IMR-90 (cell line): ENCODE measurements at regions of chr22 and their contacts with region 1.

Region 1: DNA sequence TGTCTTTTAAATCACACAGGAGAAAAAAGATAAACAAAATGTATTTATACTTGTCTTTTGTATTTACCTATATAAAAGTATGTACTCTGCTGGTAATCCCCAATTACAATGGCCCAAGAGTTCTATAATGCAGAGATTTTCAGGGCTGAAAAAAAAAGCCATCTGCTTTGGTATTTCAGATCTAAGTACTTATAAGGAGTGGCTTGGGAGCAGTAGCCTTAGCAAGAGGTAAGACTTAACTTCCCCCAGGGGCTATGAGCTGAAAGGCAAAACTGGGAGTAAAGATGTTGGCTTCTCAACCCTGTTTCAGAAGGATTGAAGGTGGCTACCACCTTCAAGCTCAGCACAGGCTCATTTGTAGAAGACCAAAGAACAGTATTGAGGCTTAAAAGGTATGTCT is 35.3 kb upstream of the EP300 start:
- DNase-seq: no peak
- ATAC-seq: no peak
- H3K4me3 ChIP-seq: no peak overlapping the region
- H3K27ac ChIP-seq: no peak overlapping the region
- H3K4me1 ChIP-seq: peaks cover 6% of the 10 kb centered on the region; the same call in 1 of the 2 replicates
- H3K27me3 ChIP-seq: no peaks in the 10 kb centered on the region
- CTCF ChIP-seq: no peak
- POLR2A ChIP-seq: no peak
- RAD21 ChIP-seq: no peak

Region 2: GRCh38 chr22:40857309-40857851 is 199.7 kb before region 1 on chr22:
- CTCF ChIA-PET with region 1: no interaction called
- POLR2A ChIA-PET with region 1: no interaction called
- dilution Hi-C with region 1: no loop called
- in situ Hi-C with region 1: no loop called
- intact Hi-C with region 1: no loop called
- DNase-seq: no peak
- ATAC-seq: no peak; the same call in 1 of the 2 replicates
- H3K4me3 ChIP-seq: peak overlapping the region; percentile 67
- H3K27ac ChIP-seq: peak overlapping the region; percentile 95
- H3K4me1 ChIP-seq: peaks cover 9% of the 10 kb centered on the region
- H3K27me3 ChIP-seq: no peaks in the 10 kb centered on the region
- CTCF ChIP-seq: no peak
- POLR2A ChIP-seq: no peak
- RAD21 ChIP-seq: no peak

Region 3: DNA sequence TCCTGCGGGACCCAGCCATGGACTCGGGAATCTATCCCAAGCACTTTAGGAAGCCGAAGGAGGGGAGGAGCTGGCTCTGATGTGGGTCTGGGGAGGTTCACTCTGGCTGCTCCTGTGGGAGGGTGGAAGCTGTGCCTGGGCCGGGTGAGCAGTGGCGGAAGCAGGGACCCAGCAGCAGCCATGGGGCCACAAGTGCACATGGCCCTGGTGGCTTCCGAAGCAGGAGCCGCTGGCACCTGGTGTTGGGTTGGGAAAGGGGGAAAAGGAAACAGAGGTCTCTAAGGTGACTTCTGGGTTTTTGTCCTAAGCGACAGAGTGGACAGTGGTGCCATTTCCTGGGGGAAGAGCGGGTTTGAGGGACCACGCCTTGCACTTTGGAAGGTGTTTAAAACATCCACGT is 66.6 kb before region 1 on chr22:
- CTCF ChIA-PET with region 1: no interaction called
- POLR2A ChIA-PET with region 1: no interaction called
- dilution Hi-C with region 1: no loop called
- in situ Hi-C with region 1: no loop called
- intact Hi-C with region 1: loop called (anchors 5 kb)
- DNase-seq: no peak
- ATAC-seq: no peak
- H3K4me3 ChIP-seq: no peak overlapping the region
- H3K27ac ChIP-seq: no peak overlapping the region
- H3K4me1 ChIP-seq: no peaks in the 10 kb centered on the region
- H3K27me3 ChIP-seq: peaks cover 26% of the 10 kb centered on the region
- CTCF ChIP-seq: no peak
- POLR2A ChIP-seq: no peak
- RAD21 ChIP-seq: no peak

Region 4: GRCh38 chr22:41780746-41781505 is 723.9 kb after region 1 on chr22:
- CTCF ChIA-PET with region 1: no interaction called
- POLR2A ChIA-PET with region 1: no interaction called
- dilution Hi-C with region 1: no loop called
- in situ Hi-C with region 1: no loop called
- intact Hi-C with region 1: no loop called
- DNase-seq: peak; percentile 63
- ATAC-seq: peak; percentile 35
- H3K4me3 ChIP-seq: no peak overlapping the region
- H3K27ac ChIP-seq: no peak overlapping the region
- H3K4me1 ChIP-seq: no peaks in the 10 kb centered on the region
- H3K27me3 ChIP-seq: no peaks in the 10 kb centered on the region; the same call in 1 of the 2 replicates
- CTCF ChIP-seq: no peak
- POLR2A ChIP-seq: no peak
- RAD21 ChIP-seq: no peak